Vagina (tissue), 2 donors: ENCODE measurements at regions of chr11 and their contacts with region 1.

Region 1: GRCh38 chr11:64298966-64299846 is 952 bp upstream of the CATSPERZ start:
- DNase-seq: no peak
- H3K4me3 ChIP-seq: peak overlapping the region; percentile 24 to 42
- H3K27ac ChIP-seq: peak overlapping the region; percentile 83
- H3K4me1 ChIP-seq: peaks cover 32% of the 10 kb centered on the region
- H3K27me3 ChIP-seq: no peaks in the 10 kb centered on the region
- CTCF ChIP-seq: no peak
- POLR2A ChIP-seq: peak in 1 of 2 donors; percentile 10

Region 2: DNA sequence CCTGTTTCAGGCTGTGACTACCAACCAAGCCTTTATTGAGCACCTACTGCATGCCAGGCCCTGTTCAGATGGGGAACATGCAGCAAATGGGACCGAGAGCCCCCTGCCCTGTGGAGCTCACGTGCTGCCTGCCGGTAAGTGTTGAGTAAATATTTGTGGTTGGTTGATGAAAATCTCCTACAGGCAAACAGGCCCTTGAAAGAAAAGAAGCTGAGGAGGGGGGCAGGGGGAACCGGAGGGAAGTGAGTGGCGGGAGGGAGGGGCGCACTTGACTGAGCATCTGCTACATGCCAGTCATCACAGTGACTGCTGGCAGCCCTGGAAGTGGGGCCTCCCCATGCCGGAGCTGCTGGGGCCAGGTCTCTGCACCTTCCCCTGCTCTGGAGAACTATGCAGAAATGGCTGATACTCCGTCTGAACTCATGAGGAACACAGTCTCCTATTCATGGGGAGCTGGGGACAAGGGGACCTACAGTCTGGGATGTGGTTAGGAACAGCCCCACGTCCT is 167.5 kb before region 1 on chr11:
- intact Hi-C with region 1: no loop called
- DNase-seq: no peak
- H3K4me3 ChIP-seq: no peak overlapping the region
- H3K27ac ChIP-seq: no peak overlapping the region
- H3K4me1 ChIP-seq: peaks cover 12% of the 10 kb centered on the region
- H3K27me3 ChIP-seq: no peaks in the 10 kb centered on the region
- CTCF ChIP-seq: no peak
- POLR2A ChIP-seq: no peak

Region 3: GRCh38 chr11:64207256-64208085 is 91.7 kb before region 1 on chr11:
- intact Hi-C with region 1: loop called (anchors 5 kb)
- DNase-seq: no peak
- H3K4me3 ChIP-seq: peak overlapping the region; percentile 27 to 40
- H3K27ac ChIP-seq: peak overlapping the region; percentile 76
- H3K4me1 ChIP-seq: peaks cover 27% of the 10 kb centered on the region
- H3K27me3 ChIP-seq: no peaks in the 10 kb centered on the region
- CTCF ChIP-seq: peak in 1 of 3 experiments; percentile 17
- POLR2A ChIP-seq: no peak